ENCODE measurements at regions of chr1 and their contacts with region 1.

Region 1: GRCh38 chr1:234699795-234700665 is 90.1 kb upstream of the IRF2BP2 start:
- DNase-seq: peak; percentile 97

Region 2: DNA sequence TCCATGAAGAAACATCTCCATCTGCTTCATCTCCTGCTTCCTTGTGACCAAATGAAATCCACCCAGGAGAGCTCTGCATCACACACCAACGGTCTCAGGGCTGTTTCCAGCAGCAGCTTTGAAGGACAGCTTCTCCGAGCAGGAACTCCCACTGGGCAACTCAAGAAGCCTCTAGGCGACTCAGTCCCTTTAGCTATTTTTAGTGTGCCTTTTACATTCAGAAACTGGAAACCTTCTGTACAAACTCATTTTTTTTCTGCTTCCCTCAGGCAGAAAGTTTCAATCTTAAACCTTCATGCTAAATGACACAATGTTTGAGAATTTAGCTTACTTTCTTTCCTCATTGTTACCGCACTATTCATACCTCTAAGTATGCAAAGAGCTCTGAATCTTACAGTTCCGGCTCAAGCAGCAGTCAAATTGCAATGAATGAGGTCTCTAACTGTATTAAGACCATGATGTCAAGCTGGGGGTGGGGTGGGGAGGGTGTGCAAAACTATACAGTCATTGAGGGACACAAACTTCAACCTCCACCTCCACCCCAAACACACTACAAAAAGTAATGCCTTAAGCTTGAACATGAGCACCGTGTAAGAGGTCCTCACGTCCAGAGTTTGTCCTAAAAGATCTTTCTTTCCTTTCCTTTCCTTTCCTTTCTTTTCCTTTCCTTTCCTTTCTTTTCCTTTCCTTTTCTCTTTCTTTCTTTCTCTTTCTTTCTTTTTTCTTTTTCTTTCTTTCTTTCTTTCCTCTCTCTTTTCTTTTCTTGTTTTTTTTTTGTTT is 204.6 kb before region 1 on chr1:
- in situ Hi-C with region 1: no loop called
- DNase-seq: peak; percentile 51

Region 3: GRCh38 chr1:234599617-234600417 is 100.2 kb before region 1 on chr1:
- in situ Hi-C with region 1: no loop called
- DNase-seq: peak; percentile 93

Region 4: GRCh38 chr1:234963180-234963903 is 263.3 kb after region 1 on chr1:
- in situ Hi-C with region 1: loop called (anchors 25 kb)
- DNase-seq: peak; percentile 96

Region 5: GRCh38 chr1:235336903-235337302 is 636.9 kb after region 1 on chr1:
- in situ Hi-C with region 1: no loop called
- DNase-seq: peak; percentile 28